CD4-positive, alpha-beta memory T cell (primary cell): ENCODE measurements at regions of chr19 and their contacts with region 1.

Region 1: DNA sequence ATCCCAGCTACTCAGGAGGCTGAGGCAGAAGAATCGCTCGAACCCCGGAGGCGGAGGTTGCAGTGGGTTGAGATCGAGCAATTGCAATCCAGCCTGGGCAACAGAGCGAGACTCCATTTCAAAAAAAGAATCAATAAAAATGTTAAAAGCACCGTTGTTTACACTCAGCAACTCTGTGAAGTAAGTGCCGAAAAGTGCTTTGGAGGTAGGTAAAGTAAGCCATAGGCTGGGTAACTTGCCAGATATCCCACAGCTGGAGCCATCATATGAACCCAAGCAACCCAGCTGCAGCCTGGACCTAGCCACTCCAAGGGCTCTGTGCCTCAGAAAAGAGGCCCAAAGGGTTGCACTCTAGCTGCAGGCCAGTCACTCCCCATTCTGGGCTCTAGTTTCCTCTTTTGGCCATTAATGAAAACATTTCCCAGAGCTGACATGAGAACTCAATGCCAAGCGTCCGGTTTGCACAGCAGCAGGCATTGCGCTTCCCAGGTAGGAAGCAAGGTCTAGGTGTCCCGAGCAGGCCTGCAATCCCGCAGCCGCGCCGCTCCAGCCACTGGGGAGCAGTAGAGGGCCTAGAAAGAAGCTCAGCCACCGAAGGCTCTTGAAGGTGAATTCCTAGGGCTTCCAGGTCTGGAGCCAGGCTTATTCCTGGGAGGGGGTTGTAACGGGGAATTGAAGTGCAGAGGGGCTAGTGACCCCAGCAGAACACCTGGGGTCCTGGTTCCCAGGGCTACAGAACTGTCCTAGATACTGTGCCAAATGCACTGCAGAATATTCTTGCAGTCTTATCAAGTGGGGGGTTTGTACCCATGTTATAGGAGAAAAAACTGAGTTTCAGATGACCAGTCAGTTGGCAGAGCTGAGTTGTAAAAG is 4.1 kb upstream of the CD79A start:
- DNase-seq: peak; percentile 59 to 70 (median 63)
- H3K4me3 ChIP-seq: no peak overlapping the region
- H3K4me3 Mint-ChIP-seq: peak overlapping the region; percentile 26 to 85 (median 68)
- H3K27ac ChIP-seq: peak overlapping the region; percentile 66
- H3K27ac Mint-ChIP-seq: peak overlapping the region; percentile 92 to 99 (median 95)
- H3K4me1 ChIP-seq: peaks cover 98% of the 10 kb centered on the region
- H3K4me1 Mint-ChIP-seq: peaks cover 45 to 97% (median 68%) of the 10 kb centered on the region in 4 donors
- H3K27me3 ChIP-seq: no peaks in the 10 kb centered on the region
- H3K27me3 Mint-ChIP-seq: no peaks in the 10 kb centered on the region

Region 2: DNA sequence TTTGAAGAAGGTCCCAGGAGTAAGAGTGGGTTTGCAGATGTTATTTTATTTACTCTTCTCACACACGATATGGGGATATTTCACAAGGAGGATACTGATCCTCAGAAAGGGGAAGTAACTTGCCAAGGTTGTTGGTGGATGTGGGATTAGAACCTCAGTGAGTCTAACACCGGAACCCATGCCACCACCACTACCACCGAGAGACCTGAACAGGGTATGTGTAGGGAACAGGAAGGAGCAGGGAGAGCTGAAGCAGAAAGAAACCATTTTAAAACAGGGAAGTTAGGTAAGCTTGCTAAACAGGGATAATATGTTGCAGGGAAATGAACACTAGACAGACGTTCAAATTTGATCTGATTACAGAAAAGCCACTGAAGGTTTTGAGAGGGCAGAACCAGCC is 88.3 kb before region 1 on chr19:
- CTCF ChIA-PET with region 1: no interaction called
- POLR2A ChIA-PET with region 1: no interaction called
- intact Hi-C with region 1: no loop called
- DNase-seq: no peak
- H3K4me3 ChIP-seq: no peak overlapping the region
- H3K4me3 Mint-ChIP-seq: peak overlapping the region in 4 of 8 donors; percentile 5 to 57 (median 36)
- H3K27ac ChIP-seq: no peak overlapping the region
- H3K27ac Mint-ChIP-seq: peak overlapping the region in 1 of 7 donors; percentile 45
- H3K4me1 ChIP-seq: peaks cover 13% of the 10 kb centered on the region
- H3K4me1 Mint-ChIP-seq: peaks cover 15 to 17% (median 16%) of the 10 kb centered on the region in 4 donors
- H3K27me3 ChIP-seq: peaks cover 11% of the 10 kb centered on the region
- H3K27me3 Mint-ChIP-seq: peaks cover 37 to 50% of the 10 kb centered on the region in 2 donors

Region 3: DNA sequence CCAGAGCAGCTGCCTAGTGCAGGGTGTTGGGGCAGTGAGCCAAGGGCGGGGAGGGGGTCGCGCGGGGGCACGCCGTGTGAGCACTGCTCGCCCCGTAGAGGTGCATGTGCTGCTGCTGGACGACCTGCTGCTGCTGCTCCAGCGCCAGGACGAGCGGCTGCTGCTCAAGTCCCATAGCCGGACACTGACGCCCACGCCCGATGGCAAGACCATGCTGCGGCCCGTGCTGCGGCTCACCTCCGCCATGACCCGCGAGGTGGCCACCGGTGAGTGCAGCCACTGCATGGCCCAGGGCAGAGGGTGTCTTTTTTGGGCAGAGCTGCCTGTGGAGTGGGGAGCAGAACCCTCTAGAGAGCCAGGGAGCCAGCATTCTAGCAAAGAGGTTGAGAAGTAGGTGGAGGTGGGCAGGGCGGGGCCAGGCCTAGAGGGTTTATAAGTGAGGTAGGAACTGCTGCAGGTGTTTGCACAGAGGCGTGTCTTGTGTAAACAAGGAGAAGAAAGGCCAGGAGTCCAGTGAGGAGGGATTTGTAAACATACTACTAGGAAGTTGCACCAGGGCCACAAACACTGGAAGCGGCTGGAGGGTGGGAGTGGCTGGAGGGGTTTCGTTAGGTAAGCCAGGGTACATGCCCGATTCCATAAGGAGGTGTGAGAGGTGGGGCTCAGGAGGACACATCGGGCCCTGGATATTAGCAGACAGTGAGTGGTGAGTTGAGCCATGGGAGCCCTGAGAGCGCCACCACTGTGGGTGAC is 31.3 kb after region 1 on chr19:
- CTCF ChIA-PET with region 1: interaction called, 8 read pairs
- POLR2A ChIA-PET with region 1: interaction called, 42 read pairs
- intact Hi-C with region 1: no loop called
- DNase-seq: no peak
- H3K4me3 ChIP-seq: no peak overlapping the region
- H3K4me3 Mint-ChIP-seq: peak overlapping the region in 1 of 8 donors; percentile 55
- H3K27ac ChIP-seq: no peak overlapping the region
- H3K27ac Mint-ChIP-seq: peak overlapping the region in 2 of 7 donors; percentile 46 to 66
- H3K4me1 ChIP-seq: peaks cover 33% of the 10 kb centered on the region
- H3K4me1 Mint-ChIP-seq: peaks cover 19 to 37% (median 26%) of the 10 kb centered on the region in 4 donors
- H3K27me3 ChIP-seq: no peaks in the 10 kb centered on the region
- H3K27me3 Mint-ChIP-seq: no peaks in the 10 kb centered on the region

Region 4: DNA sequence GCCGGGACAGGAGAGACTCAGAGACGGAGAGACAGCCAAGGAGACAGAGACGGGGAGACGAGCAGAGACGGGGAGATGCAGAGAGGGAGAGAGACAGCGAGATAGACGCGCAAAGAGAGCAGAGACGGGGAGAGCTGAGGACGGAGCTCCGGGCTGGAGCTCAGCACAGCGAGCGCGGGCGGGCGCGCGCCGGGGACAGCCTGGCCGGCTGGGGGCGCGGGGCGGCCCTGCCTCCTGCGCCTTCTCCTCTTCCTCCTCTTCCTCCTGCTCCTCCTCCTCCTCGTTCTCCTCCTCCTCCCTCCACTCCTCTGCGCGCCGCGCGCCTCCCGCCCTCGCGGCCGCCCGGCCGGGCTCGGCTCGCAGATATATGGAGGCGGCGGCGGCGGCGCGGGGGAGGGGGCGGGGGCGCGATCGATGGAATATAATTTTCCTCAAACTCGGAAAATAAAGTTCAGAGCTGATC is 55.2 kb after region 1 on chr19 and contains the start of gene ERFL:
- CTCF ChIA-PET with region 1: interaction called, 9 read pairs
- POLR2A ChIA-PET with region 1: interaction called, 36 read pairs
- intact Hi-C with region 1: loop called (anchors 1 kb)
- DNase-seq: peak in 1 of 5 donors; percentile 28
- H3K4me3 ChIP-seq: peak within 1 kb of the TSS; percentile 57 to 74
- H3K4me3 Mint-ChIP-seq: peak within 1 kb of the TSS; percentile 86 to 98 (median 94)
- H3K27ac ChIP-seq: peak within 1 kb of the TSS; percentile 33
- H3K27ac Mint-ChIP-seq: peak within 1 kb of the TSS; percentile 75 to 96 (median 89)
- H3K4me1 ChIP-seq: peaks cover 27% of the 10 kb centered on the region
- H3K4me1 Mint-ChIP-seq: peaks cover 18 to 37% (median 23%) of the 10 kb centered on the region in 4 donors
- H3K27me3 ChIP-seq: no peaks in the 10 kb centered on the region
- H3K27me3 Mint-ChIP-seq: no peaks in the 10 kb centered on the region
- total RNA-seq, gene ERFL: 6.6 to 9.2 TPM

Region 5: DNA sequence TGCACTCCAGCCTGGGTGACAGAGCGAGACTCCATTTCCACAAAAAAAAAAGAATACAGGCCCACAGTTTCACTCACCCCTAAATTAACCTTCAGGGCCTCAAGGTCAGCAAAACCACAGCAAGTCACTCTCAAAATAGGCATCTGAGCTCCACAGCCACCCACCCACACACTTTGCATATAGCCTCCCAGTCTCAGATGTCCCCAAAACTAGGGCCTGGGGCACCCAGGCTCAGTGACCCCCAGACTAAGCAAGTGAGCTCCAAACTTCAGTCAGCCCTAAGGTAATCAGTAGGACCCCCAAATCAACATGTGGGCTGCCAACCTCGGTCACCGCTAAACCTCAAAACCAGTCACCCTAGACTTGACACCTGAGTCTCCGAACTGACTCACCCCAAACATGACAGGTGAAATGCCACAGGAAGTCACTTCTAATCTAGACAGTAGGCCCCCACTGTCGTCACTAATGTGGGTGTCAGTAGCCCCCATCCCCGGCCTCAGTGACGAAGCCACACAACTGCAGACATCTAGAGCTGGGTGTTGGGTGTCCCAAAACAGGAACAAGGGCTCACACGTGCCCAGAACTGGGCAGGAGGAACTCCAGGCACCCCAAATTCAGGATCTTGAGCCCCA is 72.2 kb after region 1 on chr19:
- CTCF ChIA-PET with region 1: interaction called, 69 read pairs
- POLR2A ChIA-PET with region 1: interaction called, 69 read pairs
- intact Hi-C with region 1: no loop called
- DNase-seq: peak; percentile 88 to 99 (median 90)
- H3K4me3 ChIP-seq: no peak overlapping the region
- H3K4me3 Mint-ChIP-seq: peak overlapping the region; percentile 59 to 86 (median 68)
- H3K27ac ChIP-seq: peak overlapping the region; percentile 41
- H3K27ac Mint-ChIP-seq: peak overlapping the region; percentile 95 to 100 (median 99)
- H3K4me1 ChIP-seq: peaks cover 38% of the 10 kb centered on the region
- H3K4me1 Mint-ChIP-seq: peaks cover 23 to 63% (median 38%) of the 10 kb centered on the region in 4 donors
- H3K27me3 ChIP-seq: no peaks in the 10 kb centered on the region
- H3K27me3 Mint-ChIP-seq: peaks cover 0 to 2% of the 10 kb centered on the region in 2 donors

Region 6: DNA sequence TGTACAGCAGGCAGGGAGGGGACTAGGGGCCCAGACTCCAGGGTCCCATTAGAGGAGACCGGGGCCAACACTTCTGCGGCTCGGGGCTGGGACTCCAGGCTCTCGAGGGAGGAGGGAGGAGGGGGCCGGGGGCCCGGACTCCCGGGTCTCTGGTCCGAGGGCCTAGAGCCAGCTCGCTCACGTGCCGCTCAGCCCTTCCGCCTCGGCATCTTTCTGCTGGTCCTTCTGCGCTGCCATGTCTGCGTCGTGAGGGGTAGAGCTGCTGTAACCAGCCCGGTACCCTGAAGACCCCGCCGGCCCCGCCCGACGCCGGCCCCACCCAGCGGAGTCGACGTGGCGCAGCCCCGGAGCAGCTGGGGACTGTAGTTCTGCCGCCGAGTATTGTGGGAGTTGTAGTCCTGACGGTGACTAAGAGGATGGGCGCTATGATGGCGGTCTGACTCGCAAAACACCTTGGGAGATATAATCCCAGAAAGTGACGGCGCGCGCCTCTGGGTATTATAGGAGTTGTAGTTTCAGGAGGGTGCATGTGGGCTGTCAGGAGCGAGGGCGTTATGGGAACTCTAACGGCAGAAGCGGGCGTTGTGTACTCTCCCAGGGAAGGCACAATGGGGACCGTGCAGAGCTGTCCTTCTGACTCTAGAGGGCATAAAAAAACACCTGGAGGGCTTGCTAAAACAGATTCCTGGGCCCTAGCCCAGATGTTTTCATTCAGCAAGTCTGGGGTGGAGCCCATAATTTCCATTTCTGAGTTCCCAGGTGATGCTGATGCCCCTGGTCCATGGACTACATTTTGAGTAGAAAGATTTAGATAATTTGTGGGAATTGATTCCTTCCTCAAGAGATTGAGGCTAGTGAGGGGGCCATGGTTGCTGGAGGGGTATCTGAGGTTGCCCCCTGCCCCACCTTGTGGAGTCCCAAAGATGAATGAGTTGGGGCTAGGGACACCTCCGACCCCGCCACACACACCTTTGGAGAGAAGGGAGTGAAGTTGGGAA is 86.3 kb after region 1 on chr19 and contains the start of gene RABAC1:
- CTCF ChIA-PET with region 1: interaction called, 14 read pairs
- POLR2A ChIA-PET with region 1: interaction called, 43 read pairs
- intact Hi-C with region 1: no loop called
- DNase-seq: peak; percentile 83 to 93 (median 85)
- H3K4me3 ChIP-seq: peak within 1 kb of the TSS; percentile 73 to 85
- H3K4me3 Mint-ChIP-seq: peak within 1 kb of the TSS; percentile 90 to 97 (median 96)
- H3K27ac ChIP-seq: peak within 1 kb of the TSS; percentile 77
- H3K27ac Mint-ChIP-seq: peak within 1 kb of the TSS; percentile 82 to 99 (median 96)
- H3K4me1 ChIP-seq: peaks cover 16% of the 10 kb centered on the region
- H3K4me1 Mint-ChIP-seq: peaks cover 10 to 26% (median 17%) of the 10 kb centered on the region in 4 donors
- H3K27me3 ChIP-seq: no peaks in the 10 kb centered on the region
- H3K27me3 Mint-ChIP-seq: no peaks in the 10 kb centered on the region
- total RNA-seq, gene RABAC1: 97.4 to 100 TPM

Region 7: DNA sequence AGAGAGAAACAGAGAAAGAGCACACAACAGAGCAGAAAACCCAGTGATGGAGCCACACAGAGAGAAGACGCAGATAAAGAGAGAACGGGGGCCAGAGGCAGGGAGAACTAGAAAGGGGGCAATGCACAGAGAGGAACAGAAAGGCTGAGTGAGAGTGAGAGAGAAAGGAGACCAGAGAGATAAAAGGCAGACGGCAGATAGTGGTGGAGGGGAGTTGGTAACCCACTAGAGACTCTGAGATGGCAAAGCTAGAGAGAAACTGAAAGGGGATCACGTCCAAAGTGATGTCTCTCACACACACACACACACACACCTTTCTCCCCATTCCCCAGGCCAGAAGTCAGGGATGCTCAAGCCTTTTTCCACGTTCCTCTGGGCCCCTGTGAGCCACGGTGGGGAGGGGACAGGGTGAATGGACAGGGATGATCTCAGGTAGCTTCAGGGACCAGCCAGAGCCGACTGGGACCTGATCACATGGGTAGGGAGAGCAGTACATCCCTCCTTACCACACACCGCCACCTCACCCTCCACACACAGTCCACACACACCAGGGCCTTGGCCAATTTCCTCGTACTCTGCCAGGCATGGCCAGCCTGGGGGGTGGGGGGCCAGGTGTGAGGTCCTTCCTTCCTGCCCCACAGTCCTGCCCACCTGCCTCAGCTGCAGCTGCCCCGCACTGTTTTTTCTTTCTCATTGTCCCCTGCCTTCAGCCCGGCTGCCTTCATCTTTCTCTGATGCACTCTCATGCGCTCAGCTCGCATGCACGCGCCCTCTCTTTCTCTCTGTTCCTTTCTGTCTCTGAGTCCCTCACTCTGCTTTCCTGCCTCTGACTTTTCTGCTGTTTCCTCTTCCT is 281.7 kb after region 1 on chr19:
- CTCF ChIA-PET with region 1: no interaction called
- POLR2A ChIA-PET with region 1: no interaction called
- intact Hi-C with region 1: no loop called
- DNase-seq: no peak
- H3K4me3 ChIP-seq: no peak overlapping the region
- H3K4me3 Mint-ChIP-seq: peak overlapping the region in 5 of 8 donors; percentile 22 to 80 (median 49)
- H3K27ac ChIP-seq: no peak overlapping the region
- H3K27ac Mint-ChIP-seq: peak overlapping the region in 6 of 7 donors; percentile 4 to 80 (median 58)
- H3K4me1 ChIP-seq: peaks cover 9% of the 10 kb centered on the region
- H3K4me1 Mint-ChIP-seq: peaks cover 11 to 19% (median 16%) of the 10 kb centered on the region in 4 donors
- H3K27me3 ChIP-seq: no peaks in the 10 kb centered on the region
- H3K27me3 Mint-ChIP-seq: peaks cover 0 to 2% of the 10 kb centered on the region in 2 donors